HepG2 (cell line): ENCODE measurements at regions of chr16 and their contacts with region 1.

Region 1: GRCh38 chr16:85096921-85097320 is 15.4 kb downstream of the CIBAR2 start:
- DNase-seq: no peak
- ATAC-seq: no peak
- H3K4me3 ChIP-seq: no peak overlapping the region
- H3K27ac ChIP-seq: no peak overlapping the region
- H3K4me1 ChIP-seq: no peaks in the 10 kb centered on the region
- H3K27me3 ChIP-seq: peaks cover 8 to 82% of the 10 kb centered on the region in 2 experiments; a peak in 4 of 5 replicates
- CTCF ChIP-seq: no peak
- EP300 ChIP-seq: no peak
- POLR2A ChIP-seq: no peak
- RAD21 ChIP-seq: no peak

Region 2: GRCh38 chr16:84617791-84618580 is 478.9 kb before region 1 on chr16 and contains the start of gene COTL1:
- CTCF ChIA-PET with region 1: no interaction called
- POLR2A ChIA-PET with region 1: no interaction called
- in situ Hi-C with region 1: no loop called
- intact Hi-C with region 1: no loop called
- DNase-seq: peak; percentile 87
- ATAC-seq: peak; percentile 76
- H3K4me3 ChIP-seq: peak within 1 kb of the TSS; percentile 76 to 89 (median 85)
- H3K27ac ChIP-seq: no peak within 1 kb of the TSS
- H3K4me1 ChIP-seq: peaks cover 52% of the 10 kb centered on the region
- H3K27me3 ChIP-seq: no peaks in the 10 kb centered on the region; a peak in 1 of 5 replicates
- CTCF ChIP-seq: no peak
- EP300 ChIP-seq: no peak; a peak in 1 of 4 replicates
- POLR2A ChIP-seq: peak in 1 of 2 experiments; percentile 58; a peak in 1 of 4 replicates
- RAD21 ChIP-seq: peak; percentile 32; the same call in 1 of the 2 replicates
- total RNA-seq, gene COTL1: 8.6 and 8.7 TPM in 2 replicates

Region 3: DNA sequence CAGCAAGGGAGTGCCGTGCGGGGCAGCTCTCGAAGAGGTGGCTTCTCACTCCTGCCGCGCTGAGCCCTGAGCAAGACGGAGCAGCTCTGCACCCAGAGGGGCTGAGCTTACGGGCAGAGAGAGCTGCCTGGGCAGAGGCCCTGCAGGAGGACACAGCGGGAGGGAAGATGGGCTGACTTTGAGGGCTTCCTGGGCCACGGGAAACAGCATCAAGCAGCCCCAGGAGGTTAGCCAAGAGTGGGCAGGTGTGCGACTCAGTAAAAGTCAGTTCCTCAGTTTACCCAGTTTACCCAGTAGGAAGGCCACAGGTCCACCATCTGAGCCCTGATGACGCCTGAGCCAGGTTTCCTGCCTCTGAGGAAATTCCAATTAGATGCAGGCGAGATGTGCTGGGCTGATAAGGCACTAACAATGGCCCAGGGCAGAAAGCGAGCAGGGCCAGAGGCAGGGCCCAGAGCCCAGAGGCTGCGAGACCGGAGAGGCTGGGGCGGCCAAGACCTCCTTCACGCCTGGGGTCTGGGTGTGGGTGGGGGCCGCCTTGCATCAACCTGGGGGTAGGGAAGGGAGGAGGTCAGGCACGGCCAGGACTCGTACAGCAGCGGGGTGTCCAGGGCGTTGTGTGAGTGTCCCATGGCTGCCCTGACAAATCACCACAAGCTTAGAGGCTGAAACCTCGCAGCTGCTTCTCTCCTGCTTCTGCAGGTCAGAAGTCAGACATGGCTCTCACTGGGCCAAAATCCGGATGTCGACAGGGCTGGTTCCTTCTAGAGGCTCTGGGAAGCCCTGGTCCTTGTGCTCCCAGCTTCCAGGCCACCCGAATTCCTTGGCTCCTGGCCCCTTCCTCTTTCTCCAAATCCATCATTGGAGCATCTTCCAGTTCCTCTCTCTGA is 47.4 kb after region 1 on chr16:
- CTCF ChIA-PET with region 1: no interaction called
- POLR2A ChIA-PET with region 1: no interaction called
- in situ Hi-C with region 1: no loop called
- intact Hi-C with region 1: loop called (anchors 1 kb)
- DNase-seq: no peak
- ATAC-seq: peak; percentile 4; the same call in 1 of the 3 replicates
- H3K4me3 ChIP-seq: no peak overlapping the region
- H3K27ac ChIP-seq: no peak overlapping the region
- H3K4me1 ChIP-seq: peaks cover 90% of the 10 kb centered on the region
- H3K27me3 ChIP-seq: peaks cover 3 to 52% of the 10 kb centered on the region in 2 experiments
- CTCF ChIP-seq: no peak
- EP300 ChIP-seq: no peak
- POLR2A ChIP-seq: no peak
- RAD21 ChIP-seq: no peak